ENCODE measurements at regions of chr19 and their contacts with region 1.

Region 1: GRCh38 chr19:35740423-35741202 is 1.6 kb downstream of the IGFLR1 start:
- DNase-seq: peak; percentile 93 to 96 (median 95)
- H3K4me3 ChIP-seq: peak overlapping the region; percentile 62 to 100 (median 89)
- H3K4me3 Mint-ChIP-seq: peak overlapping the region; percentile 88 to 95
- H3K27ac ChIP-seq: peak overlapping the region; percentile 63 to 89
- H3K27ac Mint-ChIP-seq: peak overlapping the region; percentile 89 to 97 (median 92)
- H3K4me1 ChIP-seq: peaks cover 44 to 55% of the 10 kb centered on the region in 2 donors
- H3K4me1 Mint-ChIP-seq: peaks cover 40% of the 10 kb centered on the region
- H3K27me3 ChIP-seq: no peaks in the 10 kb centered on the region
- H3K27me3 Mint-ChIP-seq: no peaks in the 10 kb centered on the region
- CTCF ChIP-seq: peak; percentile 18

Region 2: DNA sequence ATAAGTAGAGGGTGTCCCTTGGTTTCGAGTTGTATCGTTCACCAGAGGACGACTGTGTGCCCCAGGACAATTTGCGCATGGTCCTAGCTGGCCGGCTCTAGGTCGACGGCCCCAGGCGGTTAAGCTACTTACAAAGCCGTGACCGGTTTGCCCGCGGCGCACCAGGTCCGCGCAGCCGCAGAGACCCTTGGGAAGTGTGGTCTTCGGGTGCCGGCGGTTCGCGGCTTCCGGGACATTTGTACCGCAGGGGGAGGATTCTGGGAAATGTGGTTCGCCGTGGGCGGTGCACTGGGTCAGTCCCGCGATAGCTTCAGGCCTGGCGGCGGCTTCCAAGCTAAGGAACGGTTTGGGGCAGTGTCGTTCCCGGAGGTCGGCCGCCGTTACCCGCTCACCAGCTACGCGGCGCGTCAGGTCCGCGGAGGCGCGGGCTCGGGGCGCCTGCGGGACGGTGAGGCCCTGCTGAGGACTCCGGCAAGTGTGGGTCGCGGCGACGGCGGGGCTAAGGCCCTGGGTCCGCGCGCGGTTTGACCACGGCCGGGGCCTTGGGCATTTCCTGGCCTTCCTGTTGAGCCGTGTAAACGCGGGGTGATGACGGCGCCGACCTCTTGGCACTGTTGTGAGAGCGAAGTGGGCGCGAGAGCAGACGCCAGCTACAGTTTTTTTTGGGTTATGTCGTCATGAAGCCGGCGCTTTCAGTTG is 1063.1 kb before region 1 on chr19 and contains the start of gene ZNF302:
- intact Hi-C with region 1: loop called in 1 of 2 experiments (anchors 10 kb)
- DNase-seq: peak; percentile 94 to 97 (median 96)
- H3K4me3 ChIP-seq: peak within 1 kb of the TSS; percentile 50 to 91 (median 79)
- H3K4me3 Mint-ChIP-seq: peak within 1 kb of the TSS; percentile 96 to 99
- H3K27ac ChIP-seq: peak within 1 kb of the TSS; percentile 93 to 98
- H3K27ac Mint-ChIP-seq: peak within 1 kb of the TSS; percentile 95 to 100 (median 99)
- H3K4me1 ChIP-seq: peaks cover 16 to 20% of the 10 kb centered on the region in 2 donors
- H3K4me1 Mint-ChIP-seq: peaks cover 16% of the 10 kb centered on the region
- H3K27me3 ChIP-seq: peaks cover 2 to 18% of the 10 kb centered on the region in 2 donors
- H3K27me3 Mint-ChIP-seq: peaks cover 4 to 23% (median 19%) of the 10 kb centered on the region in 3 donors
- CTCF ChIP-seq: peak; percentile 2
- polyA plus RNA-seq, gene ZNF302: 3.2 to 9.0 (median 4.4) TPM

Region 3: GRCh38 chr19:35436477-35437405 is 303.9 kb before region 1 on chr19:
- intact Hi-C with region 1: no loop called
- DNase-seq: peak; percentile 92 to 99 (median 99)
- H3K4me3 ChIP-seq: peak overlapping the region in 1 of 3 experiments; percentile 46
- H3K4me3 Mint-ChIP-seq: peak overlapping the region; percentile 64 to 80
- H3K27ac ChIP-seq: peak overlapping the region; percentile 71 to 83
- H3K27ac Mint-ChIP-seq: peak overlapping the region; percentile 95 to 99 (median 96)
- H3K4me1 ChIP-seq: peaks cover 82 to 86% of the 10 kb centered on the region in 2 donors
- H3K4me1 Mint-ChIP-seq: peaks cover 96% of the 10 kb centered on the region
- H3K27me3 ChIP-seq: no peaks in the 10 kb centered on the region
- H3K27me3 Mint-ChIP-seq: peaks cover 5 to 17% (median 7%) of the 10 kb centered on the region in 3 donors
- CTCF ChIP-seq: no peak

Region 4: DNA sequence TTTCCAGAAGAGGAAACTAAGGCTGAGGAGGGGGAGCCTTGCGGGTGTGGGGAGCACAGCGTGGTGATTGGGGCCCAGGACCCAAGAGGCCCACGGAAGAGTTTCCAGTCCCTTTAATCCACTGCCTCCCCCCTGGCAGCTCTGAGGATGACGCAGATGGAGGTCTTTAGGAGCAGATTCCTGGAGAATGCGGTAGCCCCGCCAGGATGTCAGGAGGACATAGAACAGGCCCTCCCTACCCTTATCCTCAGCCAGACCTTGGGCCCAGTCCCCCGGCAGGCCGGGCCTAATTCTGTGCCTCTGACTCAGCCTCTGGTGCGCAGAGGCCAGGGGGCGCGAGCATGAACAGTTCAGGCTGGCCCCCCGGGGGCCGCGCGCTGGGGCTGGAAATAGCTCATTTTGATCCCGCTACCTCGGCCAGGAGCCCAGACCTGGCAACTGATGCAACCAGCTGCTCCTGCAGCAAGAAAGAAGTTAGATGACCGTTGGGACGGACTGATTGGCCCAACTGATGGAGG is 16.7 kb after region 1 on chr19:
- intact Hi-C with region 1: no loop called
- DNase-seq: peak in 1 of 3 donors; percentile 43
- H3K4me3 ChIP-seq: peak overlapping the region; percentile 38 to 100 (median 96)
- H3K4me3 Mint-ChIP-seq: peak overlapping the region; percentile 93 to 94
- H3K27ac ChIP-seq: no peak overlapping the region
- H3K27ac Mint-ChIP-seq: peak overlapping the region in 4 of 7 donors; percentile 55 to 75 (median 62)
- H3K4me1 ChIP-seq: peaks cover 29 to 41% of the 10 kb centered on the region in 2 donors
- H3K4me1 Mint-ChIP-seq: peaks cover 32% of the 10 kb centered on the region
- H3K27me3 ChIP-seq: peaks cover 9 to 21% of the 10 kb centered on the region in 2 donors
- H3K27me3 Mint-ChIP-seq: peaks cover 18 to 30% (median 25%) of the 10 kb centered on the region in 3 donors
- CTCF ChIP-seq: no peak

Region 5: DNA sequence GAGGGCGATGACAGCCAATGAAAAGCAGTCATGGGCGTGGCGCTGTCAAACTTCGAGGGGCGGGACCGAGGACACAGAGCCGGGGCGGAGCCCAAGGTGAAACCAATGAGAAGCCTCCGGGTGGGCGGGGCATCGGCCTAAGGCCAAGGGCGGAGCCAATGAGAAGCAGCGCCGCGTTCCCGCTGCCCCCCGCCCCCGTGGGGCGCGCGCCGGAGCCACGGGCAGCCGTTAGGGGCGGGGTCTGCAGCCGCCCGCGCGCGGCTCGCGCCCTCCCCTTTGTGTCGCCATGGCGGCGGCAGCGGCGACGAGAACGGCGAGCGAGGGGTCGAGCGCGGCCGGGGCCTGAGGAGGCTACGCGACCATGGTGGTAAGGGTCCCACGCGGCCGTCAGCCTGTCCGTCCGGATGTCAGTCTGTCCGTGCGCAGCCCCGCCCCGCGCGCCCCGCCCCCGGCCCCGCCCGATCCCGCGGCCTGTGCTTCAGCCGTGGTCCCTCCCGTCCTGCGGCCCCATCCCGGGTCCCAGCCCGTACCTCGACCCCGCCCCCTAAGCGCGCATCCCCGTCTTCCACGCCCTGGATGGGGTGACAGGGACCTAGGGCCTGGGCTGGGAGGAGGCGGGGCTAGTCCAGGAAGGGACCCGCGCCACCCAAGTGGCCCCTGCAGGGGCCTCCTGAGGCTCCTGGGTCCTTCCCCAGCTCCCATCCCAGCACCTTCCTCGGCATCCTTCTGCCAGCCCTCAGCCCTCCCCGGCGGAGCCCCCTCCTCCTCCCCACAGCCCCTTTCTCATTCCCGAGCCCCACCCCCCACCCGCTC is 34.9 kb after region 1 on chr19 and contains the start of gene ARHGAP33:
- intact Hi-C with region 1: loop called in 1 of 2 experiments (anchors 5 kb)
- DNase-seq: peak; percentile 95 to 99 (median 97)
- H3K4me3 ChIP-seq: peak within 1 kb of the TSS; percentile 63 to 80 (median 73)
- H3K4me3 Mint-ChIP-seq: peak within 1 kb of the TSS; percentile 84 to 85
- H3K27ac ChIP-seq: peak within 1 kb of the TSS in 1 of 2 donors; percentile 45
- H3K27ac Mint-ChIP-seq: peak within 1 kb of the TSS in 4 of 7 donors; percentile 21 to 80 (median 48)
- H3K4me1 ChIP-seq: peaks cover 14 to 19% of the 10 kb centered on the region in 2 donors
- H3K4me1 Mint-ChIP-seq: peaks cover 23% of the 10 kb centered on the region
- H3K27me3 ChIP-seq: no peaks in the 10 kb centered on the region
- H3K27me3 Mint-ChIP-seq: peaks cover 0 to 5% (median 4%) of the 10 kb centered on the region in 3 donors
- CTCF ChIP-seq: no peak
- polyA plus RNA-seq, gene ARHGAP33: 8.6 TPM in 1 of 3 donors, not detected in the others

Region 6: GRCh38 chr19:36139473-36140303 is 399.1 kb after region 1 on chr19 and contains the start of gene CAPNS1:
- intact Hi-C with region 1: loop called in 1 of 2 experiments (anchors 10 kb)
- DNase-seq: peak; percentile 93 to 96 (median 94)
- H3K4me3 ChIP-seq: peak within 1 kb of the TSS; percentile 92 to 100 (median 96)
- H3K4me3 Mint-ChIP-seq: peak within 1 kb of the TSS; percentile 98 to 99
- H3K27ac ChIP-seq: peak within 1 kb of the TSS; percentile 90 to 98
- H3K27ac Mint-ChIP-seq: peak within 1 kb of the TSS; percentile 96 to 99 (median 98)
- H3K4me1 ChIP-seq: peaks cover 28 to 44% of the 10 kb centered on the region in 2 donors
- H3K4me1 Mint-ChIP-seq: peaks cover 30% of the 10 kb centered on the region
- H3K27me3 ChIP-seq: no peaks in the 10 kb centered on the region
- H3K27me3 Mint-ChIP-seq: peaks cover 0 to 9% (median 3%) of the 10 kb centered on the region in 3 donors
- CTCF ChIP-seq: no peak
- polyA plus RNA-seq, gene CAPNS1: 239 to 740 (median 282) TPM

Region 7: GRCh38 chr19:37172368-37173366 is 1432.1 kb after region 1 on chr19 and contains the start of gene ZNF585A:
- intact Hi-C with region 1: loop called in 1 of 2 experiments (anchors 10 kb)
- DNase-seq: peak; percentile 94 to 98 (median 97)
- H3K4me3 ChIP-seq: peak within 1 kb of the TSS; percentile 70 to 100 (median 98)
- H3K4me3 Mint-ChIP-seq: no peak within 1 kb of the TSS
- H3K27ac ChIP-seq: peak within 1 kb of the TSS; percentile 46 to 87
- H3K27ac Mint-ChIP-seq: no peak within 1 kb of the TSS
- H3K4me1 ChIP-seq: peaks cover 5 to 17% of the 10 kb centered on the region in 2 donors
- H3K4me1 Mint-ChIP-seq: no peaks in the 10 kb centered on the region
- H3K27me3 ChIP-seq: no peaks in the 10 kb centered on the region
- H3K27me3 Mint-ChIP-seq: peaks cover 0 to 1% (median 0%) of the 10 kb centered on the region in 3 donors
- CTCF ChIP-seq: no peak
- polyA plus RNA-seq, gene ZNF585A: 6.4 to 25.5 (median 23.2) TPM

Measured in CD14-positive monocyte (primary cell).